T-cell (primary cell): ENCODE measurements at regions of chr11 and their contacts with region 1.

Region 1: DNA sequence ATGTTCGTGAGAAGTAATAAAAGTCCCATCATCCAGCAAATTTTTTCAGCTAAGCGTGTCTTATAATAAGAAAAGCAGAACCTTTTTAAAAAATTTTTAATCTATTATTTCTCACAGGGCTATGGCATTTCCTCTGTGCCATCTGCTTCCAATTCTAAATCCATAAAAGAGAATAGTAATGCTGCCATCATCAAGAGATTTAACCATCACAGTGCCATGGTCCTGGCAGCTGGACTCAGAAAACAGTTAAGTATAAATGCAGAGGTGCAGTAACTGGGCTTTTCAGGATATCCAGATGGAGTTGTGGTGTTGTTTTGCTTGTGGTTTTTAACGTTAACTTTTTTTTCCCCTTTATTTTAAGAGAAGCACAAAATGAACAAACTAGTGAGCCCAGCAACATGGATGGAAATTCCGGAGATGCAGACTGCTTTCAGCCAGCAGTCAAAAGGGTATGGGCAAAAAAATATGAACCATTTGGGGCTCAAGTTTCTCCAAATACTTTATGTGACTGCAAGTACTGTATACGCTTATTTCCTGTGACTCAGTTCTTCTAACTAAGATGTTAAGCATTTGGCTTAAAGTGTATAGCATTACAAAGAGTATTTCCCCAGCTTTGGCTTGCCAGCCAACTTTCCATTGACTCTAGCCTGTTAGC is 25.2 kb downstream of the GTF2H1 start:
- DNase-seq: no peak
- ATAC-seq: no peak
- H3K4me3 ChIP-seq: no peak overlapping the region
- H3K4me3 Mint-ChIP-seq: no peak overlapping the region
- H3K27ac ChIP-seq: no peak overlapping the region
- H3K27ac Mint-ChIP-seq: no peak overlapping the region
- H3K4me1 ChIP-seq: no peaks in the 10 kb centered on the region
- H3K4me1 Mint-ChIP-seq: peaks cover 0 to 4% (median 0%) of the 10 kb centered on the region in 3 donors
- H3K27me3 ChIP-seq: no peaks in the 10 kb centered on the region
- H3K27me3 Mint-ChIP-seq: no peaks in the 10 kb centered on the region

Region 2: DNA sequence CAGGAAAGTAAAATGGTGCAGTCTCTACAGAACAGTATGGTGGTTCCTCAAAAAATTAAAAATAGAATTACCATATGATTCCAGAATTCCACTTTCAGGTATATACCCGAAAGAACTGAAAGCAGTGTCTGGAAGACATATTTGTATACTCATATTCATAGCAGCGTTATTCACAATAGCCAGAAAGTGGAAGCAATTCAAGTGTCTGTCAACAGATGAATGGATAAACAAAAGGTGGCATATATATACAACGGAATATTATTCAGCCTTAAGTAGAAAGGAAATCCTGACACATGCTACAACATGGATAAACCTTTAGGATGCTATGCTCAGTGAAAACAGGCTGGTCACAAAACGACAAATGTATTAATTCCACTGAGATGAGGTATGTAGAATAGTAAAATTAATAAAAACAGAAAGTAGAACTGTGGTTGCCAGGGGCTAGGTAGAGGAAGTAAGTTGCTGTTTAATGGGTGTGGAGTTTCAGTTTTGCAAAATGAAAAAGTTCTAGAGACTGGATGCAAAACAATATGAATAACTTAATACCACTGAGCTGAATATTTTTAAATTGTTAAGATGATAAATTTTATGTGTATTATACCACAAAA is 67.1 kb before region 1 on chr11:
- CTCF ChIA-PET with region 1: interaction called in 1 of 2 experiments, 7 read pairs
- POLR2A ChIA-PET with region 1: interaction called in 1 of 2 experiments, 16 read pairs
- DNase-seq: peak in 1 of 35 experiments; percentile 5
- ATAC-seq: no peak
- H3K4me3 ChIP-seq: no peak overlapping the region
- H3K4me3 Mint-ChIP-seq: peak overlapping the region in 2 of 3 donors; percentile 5 to 67
- H3K27ac ChIP-seq: peak overlapping the region; percentile 34
- H3K27ac Mint-ChIP-seq: peak overlapping the region; percentile 59 to 84
- H3K4me1 ChIP-seq: peaks cover 0 to 3% of the 10 kb centered on the region in 2 experiments
- H3K4me1 Mint-ChIP-seq: peaks cover 8 to 20% (median 9%) of the 10 kb centered on the region in 3 donors
- H3K27me3 ChIP-seq: no peaks in the 10 kb centered on the region
- H3K27me3 Mint-ChIP-seq: no peaks in the 10 kb centered on the region

Region 3: GRCh38 chr11:18310800-18311340 is 36.7 kb before region 1 on chr11:
- CTCF ChIA-PET with region 1: no interaction called
- POLR2A ChIA-PET with region 1: no interaction called
- DNase-seq: no peak
- ATAC-seq: no peak
- H3K4me3 ChIP-seq: no peak overlapping the region
- H3K4me3 Mint-ChIP-seq: no peak overlapping the region
- H3K27ac ChIP-seq: no peak overlapping the region
- H3K27ac Mint-ChIP-seq: no peak overlapping the region
- H3K4me1 ChIP-seq: no peaks in the 10 kb centered on the region
- H3K4me1 Mint-ChIP-seq: peaks cover 0 to 5% (median 0%) of the 10 kb centered on the region in 3 donors
- H3K27me3 ChIP-seq: no peaks in the 10 kb centered on the region
- H3K27me3 Mint-ChIP-seq: no peaks in the 10 kb centered on the region